ENCODE measurements at regions of chr17 and their contacts with region 1.

Region 1: DNA sequence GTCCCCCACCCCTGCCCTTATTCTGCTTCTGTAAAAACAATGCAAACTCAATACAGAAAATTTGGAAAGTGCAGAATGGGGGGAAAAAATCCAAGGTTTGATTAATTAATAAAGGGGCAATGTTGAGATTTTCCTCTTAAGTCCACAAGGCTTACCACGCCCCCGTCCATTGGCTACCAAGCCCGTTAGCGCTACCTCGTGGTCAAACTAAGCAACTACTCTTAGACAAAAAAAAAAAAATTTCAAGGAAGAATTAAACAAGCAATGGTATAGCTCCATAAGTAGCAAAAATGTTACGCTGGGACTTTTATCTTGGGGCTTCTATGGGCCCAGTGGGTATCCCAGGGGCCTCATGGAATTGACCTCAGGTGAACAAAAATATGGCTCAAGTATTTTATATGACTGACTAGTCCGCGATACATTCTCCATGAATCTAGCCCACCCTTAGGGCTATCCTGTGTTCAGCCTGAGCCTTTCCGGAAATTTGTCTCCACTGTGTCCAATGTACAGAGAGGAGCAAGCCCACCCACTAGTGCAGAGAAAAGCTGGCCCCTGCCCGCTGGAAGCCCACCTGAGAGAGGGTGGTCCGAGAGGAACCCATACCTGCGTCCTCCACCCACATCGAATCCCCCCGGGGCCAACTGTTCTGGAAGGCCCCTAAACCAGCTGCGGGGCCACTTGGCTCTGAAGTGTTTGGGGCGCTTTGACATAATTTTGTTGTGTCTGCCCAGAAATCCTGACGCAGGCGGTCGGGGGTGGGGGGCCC is 19.1 kb upstream of the TEX2 start:
- DNase-seq: peak; percentile 68 to 88
- ATAC-seq: peak; percentile 64 to 87; a peak in 5 of 6 replicates
- H3K4me3 ChIP-seq: no peak overlapping the region
- H3K27ac ChIP-seq: peak overlapping the region in 1 of 2 experiments; percentile 27; a peak in 1 of 6 replicates
- H3K4me1 ChIP-seq: no peaks in the 10 kb centered on the region
- CTCF ChIP-seq: peak; percentile 92
- EP300 ChIP-seq: no peak
- POLR2A ChIP-seq: no peak
- RAD21 ChIP-seq: peak; percentile 87 to 94

Region 2: DNA sequence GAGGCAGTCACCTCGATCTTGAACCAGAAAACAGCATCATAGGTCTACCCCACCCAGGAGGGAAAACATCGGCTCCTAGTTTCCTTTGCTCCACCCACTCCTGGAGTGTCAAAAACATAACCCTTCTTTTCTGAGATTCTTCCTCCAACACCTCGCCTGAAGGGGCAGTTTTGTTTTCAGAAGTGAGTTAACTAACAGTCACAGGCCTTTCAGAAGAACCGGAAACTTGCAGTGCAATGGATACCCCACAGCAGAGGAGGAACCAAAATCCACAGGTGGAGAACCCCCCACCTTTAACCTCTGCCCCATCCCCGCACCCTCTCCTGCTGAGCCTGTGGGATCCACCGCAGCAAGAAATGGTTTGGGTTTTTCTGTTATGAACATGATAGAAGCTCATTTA is 11.3 kb before region 1 on chr17:
- CTCF ChIA-PET with region 1: interaction called, 37 read pairs
- POLR2A ChIA-PET with region 1: no interaction called
- DNase-seq: no peak
- ATAC-seq: no peak
- H3K4me3 ChIP-seq: no peak overlapping the region
- H3K27ac ChIP-seq: no peak overlapping the region
- H3K4me1 ChIP-seq: no peaks in the 10 kb centered on the region
- CTCF ChIP-seq: no peak
- EP300 ChIP-seq: no peak
- POLR2A ChIP-seq: no peak
- RAD21 ChIP-seq: no peak

Region 3: DNA sequence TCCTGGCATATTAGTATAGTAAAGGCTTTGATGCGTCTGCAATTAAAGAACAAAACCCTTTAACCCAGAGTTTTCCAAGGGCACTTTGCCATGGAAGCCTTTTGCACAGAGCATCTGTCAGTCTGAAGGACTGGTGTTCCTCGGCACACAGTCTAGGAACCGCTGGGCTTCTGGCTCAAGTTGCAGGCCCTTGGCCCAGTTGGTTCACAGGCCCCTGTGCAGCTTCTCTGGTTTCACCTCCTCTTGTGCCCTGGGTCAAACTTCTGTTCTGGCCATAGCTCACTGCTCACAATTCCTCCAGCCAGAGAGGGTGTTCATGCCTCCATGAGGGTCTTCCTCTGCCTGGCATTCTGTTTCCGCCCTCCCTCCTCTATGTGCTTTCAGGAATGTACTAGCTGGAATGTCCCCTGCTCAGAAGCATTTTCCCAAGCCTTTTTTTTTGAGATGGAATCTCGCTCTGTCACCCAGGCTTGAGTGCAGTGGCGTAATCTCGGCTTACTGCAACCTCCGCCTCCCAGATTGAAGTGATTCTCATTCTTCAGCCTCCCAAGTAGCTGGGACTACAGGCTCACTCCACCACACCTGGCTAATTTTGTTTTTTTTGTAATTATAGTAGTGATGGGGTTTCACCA is 15.4 kb after region 1 on chr17:
- CTCF ChIA-PET with region 1: interaction called, 11 read pairs
- POLR2A ChIA-PET with region 1: no interaction called
- DNase-seq: no peak
- ATAC-seq: no peak
- H3K4me3 ChIP-seq: no peak overlapping the region
- H3K27ac ChIP-seq: no peak overlapping the region
- H3K4me1 ChIP-seq: no peaks in the 10 kb centered on the region
- CTCF ChIP-seq: no peak
- EP300 ChIP-seq: no peak
- POLR2A ChIP-seq: no peak
- RAD21 ChIP-seq: no peak